Sigmoid colon (tissue), 7 donors: ENCODE measurements at regions of chr3 and their contacts with region 1.

Region 1: GRCh38 chr3:64473466-64473865 is 214.3 kb downstream of the ADAMTS9 start:
- DNase-seq: no peak
- H3K4me3 ChIP-seq: no peak overlapping the region
- H3K27ac ChIP-seq: no peak overlapping the region
- H3K4me1 ChIP-seq: no peaks in the 10 kb centered on the region
- H3K27me3 ChIP-seq: peaks cover 0 to 4% (median 0%) of the 10 kb centered on the region in 3 donors
- CTCF ChIP-seq: no peak
- EP300 ChIP-seq: no peak
- POLR2A ChIP-seq: no peak

Region 2: GRCh38 chr3:64417816-64418215 is 55.6 kb before region 1 on chr3:
- intact Hi-C with region 1: loop called (anchors 5 kb)
- DNase-seq: no peak
- H3K4me3 ChIP-seq: no peak overlapping the region
- H3K27ac ChIP-seq: no peak overlapping the region
- H3K4me1 ChIP-seq: no peaks in the 10 kb centered on the region
- H3K27me3 ChIP-seq: no peaks in the 10 kb centered on the region
- CTCF ChIP-seq: no peak
- EP300 ChIP-seq: no peak
- POLR2A ChIP-seq: no peak

Region 3: DNA sequence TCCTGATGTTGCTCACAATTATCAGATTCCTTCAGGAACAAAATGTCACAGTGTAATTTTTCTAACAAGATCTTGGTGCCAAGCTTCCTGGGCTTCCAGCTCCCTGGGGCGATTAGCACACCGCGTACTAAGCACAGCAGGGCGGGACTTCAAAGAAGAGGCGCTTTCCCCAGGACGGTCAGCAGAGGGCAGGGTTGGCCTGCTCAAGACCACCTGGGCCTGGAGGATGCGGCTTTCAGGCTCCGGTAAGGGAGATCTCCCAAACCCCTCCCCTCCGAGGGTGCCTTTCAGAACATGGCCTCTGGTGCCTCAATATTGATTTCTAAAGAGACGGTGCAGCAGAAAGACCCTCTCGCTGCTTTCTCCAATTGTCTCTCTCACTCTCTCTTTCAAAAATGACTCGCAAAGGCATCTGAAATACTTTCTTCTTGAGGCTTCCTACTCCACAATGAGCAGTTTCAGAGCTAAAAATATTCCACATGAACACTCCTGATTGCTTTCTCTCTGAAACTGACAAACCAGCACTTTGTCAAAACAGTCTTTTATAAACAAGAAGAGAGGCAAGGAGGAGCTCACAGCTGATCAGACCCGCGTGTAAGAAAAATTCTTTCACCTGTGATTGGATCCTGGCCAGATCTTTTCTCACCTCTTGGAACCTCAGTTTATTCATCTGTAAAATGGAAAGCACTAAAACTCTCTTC is 60.3 kb after region 1 on chr3:
- intact Hi-C with region 1: no loop called
- DNase-seq: peak; percentile 98
- H3K4me3 ChIP-seq: no peak overlapping the region
- H3K27ac ChIP-seq: peak overlapping the region; percentile 60 to 81 (median 68)
- H3K4me1 ChIP-seq: peaks cover 0 to 41% (median 22%) of the 10 kb centered on the region in 4 donors
- H3K27me3 ChIP-seq: no peaks in the 10 kb centered on the region
- CTCF ChIP-seq: peak; percentile 81 to 87 (median 85)
- EP300 ChIP-seq: peak in 3 of 4 donors; percentile 10 to 81 (median 77)
- POLR2A ChIP-seq: no peak

Region 4: GRCh38 chr3:64708454-64708853 is 235.0 kb after region 1 on chr3:
- intact Hi-C with region 1: no loop called
- DNase-seq: no peak
- H3K4me3 ChIP-seq: no peak overlapping the region
- H3K27ac ChIP-seq: no peak overlapping the region
- H3K4me1 ChIP-seq: peaks cover 0 to 12% (median 0%) of the 10 kb centered on the region in 4 donors
- H3K27me3 ChIP-seq: no peaks in the 10 kb centered on the region
- CTCF ChIP-seq: no peak
- EP300 ChIP-seq: no peak
- POLR2A ChIP-seq: no peak